ENCODE measurements at regions of chr10 and their contacts with region 1.

Region 1: GRCh38 chr10:70758757-70759514 is 26.2 kb downstream of the TBATA start:
- H3K4me3 Mint-ChIP-seq: no peak overlapping the region
- H3K27ac Mint-ChIP-seq: no peak overlapping the region
- H3K4me1 Mint-ChIP-seq: peaks cover 52% of the 10 kb centered on the region
- H3K27me3 Mint-ChIP-seq: peaks cover 11% of the 10 kb centered on the region

Region 2: DNA sequence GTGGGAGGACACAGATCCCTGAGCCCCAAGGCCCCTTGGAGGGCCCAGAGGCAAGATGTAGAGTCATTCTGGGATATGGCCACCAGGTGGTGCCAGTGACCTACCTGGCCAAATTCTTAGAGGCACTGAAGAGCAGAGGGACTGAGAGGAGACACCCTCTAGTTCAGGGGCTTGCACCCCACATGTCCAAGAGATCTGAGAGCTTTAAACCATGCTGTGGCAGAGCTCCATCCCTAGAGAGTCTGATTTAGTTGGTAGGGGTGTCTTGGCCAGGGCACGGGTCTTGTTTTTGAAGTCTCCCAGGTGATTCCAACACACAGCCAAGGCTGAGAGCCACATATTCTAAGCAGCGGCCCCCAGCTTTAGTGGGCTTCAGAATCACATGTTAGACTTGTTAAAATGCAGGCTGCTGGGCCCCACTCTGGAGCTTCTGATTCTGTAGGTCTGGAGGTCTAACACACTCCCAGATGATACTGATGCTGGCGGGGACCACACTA is 208.9 kb before region 1 on chr10:
- intact Hi-C with region 1: loop called (anchors 1 kb)
- H3K4me3 Mint-ChIP-seq: no peak overlapping the region
- H3K27ac Mint-ChIP-seq: no peak overlapping the region
- H3K4me1 Mint-ChIP-seq: peaks cover 1% of the 10 kb centered on the region
- H3K27me3 Mint-ChIP-seq: no peaks in the 10 kb centered on the region

Region 3: GRCh38 chr10:70619271-70620019 is 139.5 kb before region 1 on chr10:
- intact Hi-C with region 1: loop called (anchors 1 kb)
- H3K4me3 Mint-ChIP-seq: no peak overlapping the region
- H3K27ac Mint-ChIP-seq: no peak overlapping the region
- H3K4me1 Mint-ChIP-seq: peaks cover 20% of the 10 kb centered on the region
- H3K27me3 Mint-ChIP-seq: peaks cover 24% of the 10 kb centered on the region

Region 4: GRCh38 chr10:70672165-70673042 is 86.5 kb before region 1 on chr10 and contains the start of gene ADAMTS14:
- intact Hi-C with region 1: loop called (anchors 5 kb)
- H3K4me3 Mint-ChIP-seq: peak within 1 kb of the TSS; percentile 63
- H3K27ac Mint-ChIP-seq: peak within 1 kb of the TSS; percentile 10
- H3K4me1 Mint-ChIP-seq: peaks cover 67% of the 10 kb centered on the region
- H3K27me3 Mint-ChIP-seq: peaks cover 69% of the 10 kb centered on the region

Region 5: DNA sequence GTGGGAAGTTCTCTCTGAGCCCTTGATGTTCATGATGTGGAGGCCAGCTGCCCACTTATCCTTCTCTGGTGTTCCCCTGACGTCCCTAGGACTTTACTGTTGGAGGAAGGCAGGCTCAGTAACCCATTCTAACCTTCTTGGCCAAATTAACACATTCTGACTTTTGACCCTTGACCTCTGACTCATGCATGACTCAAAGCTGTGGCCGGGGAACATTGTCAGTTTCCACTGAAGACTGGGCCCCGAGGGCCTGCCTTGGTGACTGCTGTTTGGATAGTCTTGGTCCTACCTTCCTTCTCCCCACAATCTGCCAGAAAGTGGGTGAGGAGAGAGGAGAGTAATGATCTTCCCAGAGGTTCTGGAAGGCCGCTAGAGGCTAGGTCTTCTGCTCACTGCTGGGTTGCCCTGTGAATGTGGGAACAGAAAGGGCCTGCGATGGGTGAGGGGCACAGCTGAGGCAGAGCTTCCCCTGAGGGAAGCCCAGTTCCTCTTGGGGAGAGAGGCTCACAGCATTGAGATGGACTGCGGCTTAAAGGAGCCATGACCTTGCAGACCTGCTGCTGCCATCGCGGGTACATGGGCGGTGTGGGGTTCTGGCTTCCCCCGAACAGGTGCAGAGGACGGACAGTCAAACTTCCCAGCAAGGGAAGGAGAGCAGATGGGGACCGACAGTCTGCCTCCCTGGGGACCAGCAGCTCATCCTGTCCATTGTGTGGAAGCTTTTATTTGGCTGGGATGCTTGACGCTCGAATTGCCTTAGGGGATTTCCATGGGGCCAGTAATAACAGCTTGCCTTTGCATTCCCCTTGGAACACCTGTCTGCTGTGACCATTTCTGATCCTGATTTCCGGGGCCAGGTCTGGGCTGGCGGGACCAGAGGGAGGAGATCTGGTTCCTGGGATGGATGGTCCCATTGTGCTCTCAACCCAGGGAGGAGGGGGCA is 42.8 kb before region 1 on chr10:
- intact Hi-C with region 1: loop called (anchors 5 kb)
- H3K4me3 Mint-ChIP-seq: peak overlapping the region; percentile 43
- H3K27ac Mint-ChIP-seq: peak overlapping the region; percentile 91
- H3K4me1 Mint-ChIP-seq: peaks cover 45% of the 10 kb centered on the region
- H3K27me3 Mint-ChIP-seq: no peaks in the 10 kb centered on the region

Region 6: DNA sequence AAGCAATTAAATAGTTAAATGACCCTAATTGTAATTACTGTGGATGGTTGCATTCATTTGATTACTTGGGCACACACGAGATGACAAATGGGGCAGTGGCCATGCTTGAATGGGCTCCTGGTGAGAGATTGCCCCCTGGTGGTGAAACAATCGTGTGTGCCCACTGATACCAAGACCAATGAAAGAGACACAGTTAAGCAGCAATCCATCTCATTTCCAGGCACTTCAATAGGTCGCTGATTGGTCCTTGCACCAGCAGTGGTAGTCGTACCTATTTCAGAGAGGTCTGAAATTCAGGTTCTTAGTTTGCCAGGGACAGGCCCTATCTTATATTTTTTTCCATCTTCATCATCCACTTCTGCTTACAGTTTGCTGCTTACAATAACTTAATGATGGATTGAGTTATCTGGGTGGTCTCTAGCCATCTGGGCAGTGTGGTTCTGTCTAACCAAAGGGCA is 121.2 kb after region 1 on chr10:
- intact Hi-C with region 1: loop called (anchors 2 kb)
- H3K4me3 Mint-ChIP-seq: no peak overlapping the region
- H3K27ac Mint-ChIP-seq: peak overlapping the region; percentile 78
- H3K4me1 Mint-ChIP-seq: peaks cover 20% of the 10 kb centered on the region
- H3K27me3 Mint-ChIP-seq: no peaks in the 10 kb centered on the region